Sciatic nerve (tissue), 2 donors: ENCODE measurements at regions of chr7 and their contacts with region 1.

Region 1: GRCh38 chr7:140719721-140720120 is 23.2 kb downstream of the NDUFB2 start:
- DNase-seq: no peak
- ATAC-seq: no peak

Region 2: DNA sequence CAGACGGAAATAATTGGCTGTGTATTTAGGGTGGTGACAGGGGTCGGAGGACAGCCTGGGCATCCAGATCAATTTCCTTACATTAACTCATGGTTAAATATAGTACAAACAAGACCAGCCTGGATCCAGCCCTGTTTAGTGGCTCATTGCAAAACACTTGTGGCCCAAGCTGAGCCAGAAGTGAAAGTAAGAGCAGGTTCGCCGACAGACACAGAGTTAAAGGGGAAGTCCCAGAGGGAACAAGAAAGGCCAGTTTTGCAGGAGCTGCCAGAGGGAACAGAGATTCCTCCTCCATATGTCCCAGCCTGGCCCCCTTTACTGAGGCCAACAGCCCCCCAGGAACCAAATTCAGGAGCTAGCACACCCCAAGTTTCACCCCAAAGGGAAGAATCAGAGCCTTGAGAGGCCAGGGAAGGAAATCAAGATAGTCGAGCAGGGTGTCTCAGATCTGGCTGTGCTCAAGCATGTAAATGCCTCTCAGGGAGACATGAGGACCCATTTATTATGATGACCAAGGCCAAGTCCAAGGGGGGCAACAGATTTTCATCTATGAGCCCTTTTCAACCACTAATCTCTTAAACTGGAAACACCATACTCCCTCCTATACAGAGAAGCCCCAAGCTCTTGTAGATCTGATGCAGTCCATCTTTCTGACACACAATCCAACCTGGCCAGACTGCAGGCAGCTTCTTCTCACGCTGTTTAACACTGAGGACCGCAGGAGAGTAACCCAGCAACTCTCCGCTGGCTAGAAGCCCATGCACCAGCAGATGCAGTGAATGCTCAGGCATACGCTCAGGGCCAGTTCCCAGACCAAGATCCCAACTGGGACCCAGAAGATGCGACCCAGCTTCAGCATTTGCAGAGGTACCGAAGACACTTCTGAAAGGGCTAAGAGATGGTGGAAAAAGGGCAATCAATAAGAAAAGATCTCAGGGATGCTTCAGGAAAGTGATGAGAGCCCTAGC is 62.9 kb before region 1 on chr7:
- intact Hi-C with region 1: no loop called
- DNase-seq: peak; percentile 64
- ATAC-seq: peak; percentile 66

Region 3: DNA sequence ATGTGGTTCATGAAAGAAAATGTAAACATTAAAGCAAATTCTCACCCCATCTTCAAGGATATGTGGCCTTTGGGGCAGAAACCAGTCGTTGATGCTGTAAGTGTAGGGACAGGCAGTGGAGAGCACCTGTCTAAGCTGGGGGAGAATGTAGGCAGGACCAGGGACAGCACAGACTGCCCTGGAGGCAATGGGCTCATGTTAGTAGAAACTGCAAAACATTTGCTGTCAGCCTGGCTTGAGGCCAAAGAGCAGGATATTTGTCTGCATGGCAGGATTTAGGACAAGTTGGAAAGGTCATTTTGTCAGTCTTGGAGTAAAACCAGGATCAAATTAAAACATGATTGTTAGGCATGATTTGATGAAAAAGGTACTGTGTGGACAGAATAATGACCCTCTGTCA is 619.9 kb after region 1 on chr7:
- intact Hi-C with region 1: loop called (anchors 5 kb)
- DNase-seq: no peak
- ATAC-seq: no peak